ENCODE measurements at regions of chr1 and their contacts with region 1.

Region 1: GRCh38 chr1:214328770-214329469 is 48.0 kb downstream of the SMYD2 start:
- DNase-seq: peak; percentile 75 to 87
- H3K4me3 ChIP-seq: no peak overlapping the region
- H3K27ac ChIP-seq: no peak overlapping the region
- H3K4me1 ChIP-seq: no peaks in the 10 kb centered on the region; a peak in 2 of 7 replicates
- H3K27me3 ChIP-seq: no peaks in the 10 kb centered on the region
- CTCF ChIP-seq: peak; percentile 91 to 97 (median 96)
- EP300 ChIP-seq: peak in 1 of 2 experiments; percentile 8; a peak in 1 of 3 replicates
- POLR2A ChIP-seq: no peak
- RAD21 ChIP-seq: peak; percentile 100

Region 2: DNA sequence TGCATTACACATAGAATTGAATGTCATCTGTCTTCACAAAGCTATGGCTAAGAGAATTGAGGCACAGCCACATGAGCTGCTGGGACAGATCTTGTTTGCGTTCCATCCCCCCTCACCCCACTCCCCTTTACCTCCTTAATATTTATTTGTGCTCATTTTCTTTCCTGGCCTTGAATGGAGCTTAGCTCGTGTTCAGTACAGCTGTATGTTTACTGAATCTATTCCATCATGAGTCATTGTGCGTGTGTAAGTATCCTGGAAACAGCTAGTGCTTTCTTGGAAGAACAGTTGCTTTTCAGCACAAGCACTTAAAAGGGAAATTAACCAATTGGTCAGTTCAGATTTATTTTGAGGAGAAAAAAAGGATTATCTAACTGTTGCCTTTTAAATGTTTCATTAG is 326.4 kb before region 1 on chr1:
- CTCF ChIA-PET with region 1: no interaction called
- POLR2A ChIA-PET with region 1: no interaction called
- DNase-seq: peak in 1 of 2 experiments; percentile 13
- H3K4me3 ChIP-seq: no peak overlapping the region
- H3K27ac ChIP-seq: no peak overlapping the region
- H3K4me1 ChIP-seq: peaks cover 0 to 3% (median 0%) of the 10 kb centered on the region in 4 experiments; a peak in 2 of 7 replicates
- H3K27me3 ChIP-seq: no peaks in the 10 kb centered on the region
- CTCF ChIP-seq: no peak
- EP300 ChIP-seq: no peak
- POLR2A ChIP-seq: no peak
- RAD21 ChIP-seq: no peak

Region 3: GRCh38 chr1:214224611-214225354 is 104.1 kb before region 1 on chr1:
- CTCF ChIA-PET with region 1: interaction called, 541 read pairs
- POLR2A ChIA-PET with region 1: interaction called, 3 read pairs
- DNase-seq: peak; percentile 13 to 54
- H3K4me3 ChIP-seq: peak overlapping the region; percentile 21 to 53 (median 44); a peak in 6 of 8 replicates
- H3K27ac ChIP-seq: no peak overlapping the region
- H3K4me1 ChIP-seq: peaks cover 2 to 14% (median 5%) of the 10 kb centered on the region in 4 experiments; a peak in 4 of 7 replicates
- H3K27me3 ChIP-seq: peaks cover 0 to 20% (median 15%) of the 10 kb centered on the region in 4 experiments; a peak in 4 of 7 replicates
- CTCF ChIP-seq: no peak
- EP300 ChIP-seq: no peak
- POLR2A ChIP-seq: no peak
- RAD21 ChIP-seq: no peak

Region 4: GRCh38 chr1:214281021-214281719 is 47.8 kb before region 1 on chr1 and contains the start of gene SMYD2:
- CTCF ChIA-PET with region 1: interaction called, 162 read pairs
- POLR2A ChIA-PET with region 1: no interaction called
- DNase-seq: peak in 1 of 2 experiments; percentile 85
- H3K4me3 ChIP-seq: peak within 1 kb of the TSS; percentile 70 to 79 (median 70)
- H3K27ac ChIP-seq: peak within 1 kb of the TSS; percentile 33; the same call in 1 of the 2 replicates
- H3K4me1 ChIP-seq: peaks cover 2 to 12% (median 4%) of the 10 kb centered on the region in 4 experiments; a peak in 4 of 7 replicates
- H3K27me3 ChIP-seq: peaks cover 8 to 38% (median 34%) of the 10 kb centered on the region in 4 experiments
- CTCF ChIP-seq: no peak
- EP300 ChIP-seq: no peak
- POLR2A ChIP-seq: no peak
- RAD21 ChIP-seq: no peak
- total RNA-seq, gene SMYD2: 4.4 and 5.2 TPM in 2 replicates

Region 5: DNA sequence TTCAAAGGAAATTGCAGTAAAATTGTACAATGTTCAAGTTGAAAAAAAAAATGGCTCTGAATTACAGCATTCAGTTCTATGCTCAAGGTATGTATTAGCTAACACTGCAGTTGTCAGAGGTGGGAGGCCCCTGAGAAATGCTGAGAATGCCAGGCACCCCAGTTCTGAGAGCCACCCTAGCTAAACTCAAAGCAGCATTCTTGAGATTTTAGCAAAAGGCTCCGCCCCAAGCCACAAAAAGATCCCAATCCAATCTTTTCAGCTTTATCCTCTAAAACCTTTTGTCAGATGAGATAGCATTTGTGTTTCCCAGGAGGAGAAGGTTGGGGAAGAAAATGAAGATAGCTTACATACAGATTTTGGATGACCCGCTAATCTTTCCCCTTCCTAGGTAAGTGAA is 20.9 kb after region 1 on chr1:
- CTCF ChIA-PET with region 1: interaction called, 124 read pairs
- POLR2A ChIA-PET with region 1: interaction called, 5 read pairs
- DNase-seq: no peak
- H3K4me3 ChIP-seq: no peak overlapping the region
- H3K27ac ChIP-seq: no peak overlapping the region
- H3K4me1 ChIP-seq: peaks cover 3 to 11% (median 6%) of the 10 kb centered on the region in 4 experiments
- H3K27me3 ChIP-seq: no peaks in the 10 kb centered on the region
- CTCF ChIP-seq: no peak
- EP300 ChIP-seq: no peak
- POLR2A ChIP-seq: no peak
- RAD21 ChIP-seq: no peak

Region 6: DNA sequence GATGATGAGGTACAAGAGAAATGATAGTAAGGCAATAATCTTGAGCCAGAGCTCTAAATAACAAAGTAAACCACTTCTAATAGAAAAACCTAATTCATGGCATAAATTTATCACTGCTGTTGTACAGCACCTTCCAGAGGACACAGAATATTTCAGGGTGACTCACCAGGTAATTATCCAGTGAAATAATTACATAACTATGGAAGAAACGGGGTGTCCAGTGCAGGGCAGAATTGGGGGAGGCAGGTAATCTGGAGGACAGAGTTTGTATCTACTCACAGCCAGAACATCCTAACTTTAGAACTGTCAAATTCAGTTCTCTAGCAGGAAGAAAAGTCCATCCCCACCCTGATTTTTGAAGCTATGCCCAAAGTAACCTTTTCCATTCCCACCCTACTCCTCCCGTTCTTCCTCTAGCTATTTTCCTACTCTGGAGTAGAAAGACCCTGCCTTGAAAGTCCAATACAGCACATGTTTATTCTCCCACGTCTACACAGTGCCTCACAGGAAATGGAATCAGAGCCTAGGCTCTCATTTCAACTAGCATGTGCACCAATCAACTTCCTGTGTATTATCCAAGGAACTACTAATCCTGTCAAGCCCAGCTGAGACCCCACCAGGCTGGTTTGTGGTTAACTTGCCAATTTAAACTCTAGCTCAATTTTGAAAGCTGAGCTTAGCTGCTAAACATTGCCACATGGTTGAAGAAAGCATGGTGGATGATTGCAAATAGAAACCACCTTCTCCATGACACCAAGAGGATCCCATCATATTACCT is 125.9 kb after region 1 on chr1:
- CTCF ChIA-PET with region 1: interaction called, 15 read pairs
- POLR2A ChIA-PET with region 1: no interaction called
- DNase-seq: no peak
- H3K4me3 ChIP-seq: no peak overlapping the region
- H3K27ac ChIP-seq: no peak overlapping the region
- H3K4me1 ChIP-seq: peaks cover 1 to 19% (median 9%) of the 10 kb centered on the region in 4 experiments; a peak in 5 of 7 replicates
- H3K27me3 ChIP-seq: no peaks in the 10 kb centered on the region
- CTCF ChIP-seq: no peak
- EP300 ChIP-seq: no peak
- POLR2A ChIP-seq: no peak
- RAD21 ChIP-seq: no peak

Region 7: DNA sequence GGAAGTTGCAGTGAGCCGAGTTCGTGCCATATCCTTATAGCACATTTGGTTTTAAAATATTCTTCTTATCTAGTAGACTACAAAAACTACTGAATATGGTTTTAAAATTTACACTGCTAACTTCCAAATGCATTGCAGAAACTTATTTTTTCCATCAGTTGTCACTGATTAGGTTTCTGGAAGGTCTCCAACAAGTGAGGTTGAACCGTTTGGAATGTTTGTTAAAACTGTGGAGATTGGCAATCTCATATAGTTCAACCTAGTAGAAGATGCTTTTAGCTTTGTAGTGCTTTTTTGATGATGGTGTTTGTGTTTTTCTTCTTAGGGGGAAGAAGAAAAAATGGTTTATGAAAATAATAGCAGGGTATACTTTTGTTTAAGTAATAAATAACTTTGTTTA is 287.0 kb after region 1 on chr1:
- CTCF ChIA-PET with region 1: interaction called, 24 read pairs
- POLR2A ChIA-PET with region 1: no interaction called
- DNase-seq: no peak
- H3K4me3 ChIP-seq: no peak overlapping the region
- H3K27ac ChIP-seq: no peak overlapping the region
- H3K4me1 ChIP-seq: no peaks in the 10 kb centered on the region
- H3K27me3 ChIP-seq: no peaks in the 10 kb centered on the region
- CTCF ChIP-seq: no peak
- EP300 ChIP-seq: no peak
- POLR2A ChIP-seq: no peak
- RAD21 ChIP-seq: no peak

Measured in H1 (cell line).